PC-9 (cell line): ENCODE measurements at regions of chr17 and their contacts with region 1.

Region 1: DNA sequence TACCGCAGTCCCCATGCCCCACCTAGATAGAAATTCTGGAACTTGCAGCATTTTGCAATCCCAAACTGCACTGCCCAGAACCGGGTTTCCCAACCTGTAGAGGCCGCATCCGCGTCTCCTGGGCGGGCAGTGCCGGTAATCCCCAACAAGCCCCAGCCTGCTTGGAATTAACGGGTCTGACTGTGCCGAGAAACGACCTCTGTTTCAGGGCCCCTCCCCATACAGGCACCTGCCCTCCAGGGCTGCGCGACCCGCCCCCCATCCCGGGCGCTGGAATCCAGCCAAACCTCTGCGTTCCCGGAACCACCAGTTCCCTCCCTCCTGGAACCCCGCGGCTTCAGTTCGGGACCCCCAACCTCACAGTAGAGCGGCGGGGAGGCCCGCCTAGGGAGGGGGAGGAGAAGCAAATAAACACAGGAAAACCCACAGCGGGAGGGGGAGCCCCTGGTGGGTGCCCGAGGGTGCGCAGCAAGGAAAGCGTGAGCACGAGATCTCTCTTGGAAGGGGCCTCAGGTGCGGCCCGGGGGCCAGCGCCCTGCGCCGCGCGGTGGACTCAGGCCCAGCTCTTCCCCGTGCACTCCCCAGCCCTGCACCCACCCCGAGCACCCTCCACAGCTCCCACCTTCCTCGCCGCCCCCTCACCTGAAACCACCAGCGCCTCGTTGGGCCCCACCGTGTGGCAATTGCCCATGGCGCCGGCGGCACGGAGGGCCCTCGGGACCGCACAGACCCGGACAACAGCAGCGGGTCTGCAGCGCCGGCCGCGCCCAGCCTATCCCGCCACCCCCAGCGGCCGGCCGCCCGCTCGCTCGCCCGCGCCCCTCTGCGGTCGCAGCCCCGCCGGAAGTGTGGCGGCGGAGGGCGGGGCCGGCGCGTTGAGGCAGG is at the start of gene FLOT2:
- DNase-seq: peak in 1 of 2 experiments; percentile 58
- H3K4me3 ChIP-seq: peak within 1 kb of the TSS; percentile 80
- H3K27ac ChIP-seq: no peak within 1 kb of the TSS
- H3K4me1 ChIP-seq: peaks cover 28% of the 10 kb centered on the region
- H3K27me3 ChIP-seq: no peaks in the 10 kb centered on the region
- CTCF ChIP-seq: no peak
- total RNA-seq, gene FLOT2: 118 and 128 TPM in 2 replicates

Region 2: DNA sequence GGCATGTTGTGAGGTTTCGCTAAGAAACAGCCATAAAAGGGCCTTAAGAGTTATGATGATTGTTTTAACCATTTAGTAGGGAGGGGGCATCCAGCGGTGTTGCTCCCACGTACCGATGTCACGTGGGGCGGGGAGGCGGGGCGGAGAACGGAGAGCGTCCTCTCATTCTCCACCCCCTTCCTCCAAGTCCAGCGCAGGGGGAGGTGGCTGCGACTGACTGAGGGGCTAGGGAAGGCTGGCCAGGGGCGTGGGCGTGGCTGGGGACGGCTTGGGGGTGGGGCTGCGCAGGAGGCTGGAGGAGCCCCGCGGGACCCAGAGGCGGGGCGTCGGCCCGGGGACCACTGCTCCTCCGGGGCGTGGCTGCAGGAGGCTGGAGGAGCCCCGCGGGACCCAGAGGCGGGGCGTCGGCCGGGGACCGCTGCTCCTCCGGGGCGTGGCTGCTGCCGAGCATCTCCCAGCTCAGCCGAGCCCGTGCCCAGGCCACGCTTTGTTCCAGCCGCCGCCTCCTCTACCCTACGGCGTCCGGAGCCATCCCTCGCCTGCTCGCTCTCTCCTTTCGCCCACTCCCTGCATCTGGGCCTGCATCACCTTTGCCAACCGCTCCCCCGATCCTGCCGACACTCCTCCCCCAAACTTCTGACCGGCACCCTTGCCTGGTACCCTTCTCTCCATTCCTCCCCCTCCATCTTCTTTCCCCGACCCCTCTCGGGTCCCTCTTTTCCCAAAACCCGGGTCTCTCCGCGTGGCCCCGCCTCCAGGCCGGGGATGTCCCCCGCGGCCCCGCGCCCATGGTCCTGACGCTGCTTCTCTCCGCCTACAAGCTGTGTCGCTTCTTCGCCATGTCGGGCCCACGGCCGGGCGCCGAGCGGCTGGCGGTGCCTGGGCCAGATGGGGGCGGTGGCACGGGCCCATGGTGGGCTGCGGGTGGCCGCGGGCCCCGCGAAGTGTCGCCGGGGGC is 525.6 kb before region 1 on chr17 and contains the start of gene SARM1:
- CTCF ChIA-PET with region 1: no interaction called
- POLR2A ChIA-PET with region 1: no interaction called
- intact Hi-C with region 1: no loop called
- DNase-seq: no peak
- H3K4me3 ChIP-seq: no peak within 1 kb of the TSS
- H3K27ac ChIP-seq: no peak within 1 kb of the TSS
- H3K4me1 ChIP-seq: peaks cover 18% of the 10 kb centered on the region
- H3K27me3 ChIP-seq: no peaks in the 10 kb centered on the region
- CTCF ChIP-seq: no peak
- total RNA-seq, gene SARM1: 7.3 and 8.6 TPM in 2 replicates

Region 3: GRCh38 chr17:28743225-28744103 is 153.7 kb before region 1 on chr17 and contains the start of gene TRAF4:
- CTCF ChIA-PET with region 1: no interaction called
- POLR2A ChIA-PET with region 1: interaction called, 13 read pairs
- intact Hi-C with region 1: no loop called
- DNase-seq: peak; percentile 94
- H3K4me3 ChIP-seq: peak within 1 kb of the TSS; percentile 97
- H3K27ac ChIP-seq: peak within 1 kb of the TSS; percentile 96
- H3K4me1 ChIP-seq: peaks cover 42% of the 10 kb centered on the region
- H3K27me3 ChIP-seq: no peaks in the 10 kb centered on the region
- CTCF ChIP-seq: peak; percentile 3; the same call in 1 of the 2 replicates
- total RNA-seq, gene TRAF4: 159 and 169 TPM in 2 replicates

Region 4: DNA sequence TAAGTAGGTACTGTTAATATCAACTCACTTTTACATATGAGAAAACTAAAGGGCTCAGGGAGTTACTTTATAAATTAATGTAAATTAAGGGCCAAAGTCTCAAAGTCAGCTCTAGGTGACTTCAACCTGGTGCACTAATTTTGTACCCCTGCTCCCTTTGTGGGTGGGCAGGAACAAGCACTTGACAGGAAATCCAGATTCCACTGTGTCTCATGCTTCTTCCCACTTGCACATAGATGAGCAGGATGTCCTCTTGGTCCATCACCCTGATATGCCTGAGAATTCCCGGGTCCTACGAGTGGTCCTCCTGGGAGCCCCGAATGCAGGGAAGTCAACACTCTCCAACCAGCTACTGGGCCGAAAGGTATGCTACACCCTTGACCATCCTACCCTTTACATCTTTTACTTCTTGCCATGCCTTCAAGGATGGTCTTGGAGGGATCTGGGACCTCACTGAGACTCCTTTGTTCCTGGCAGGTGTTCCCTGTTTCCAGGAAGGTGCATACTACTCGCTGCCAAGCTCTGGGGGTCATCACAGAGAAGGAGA is 41.0 kb before region 1 on chr17:
- CTCF ChIA-PET with region 1: no interaction called
- POLR2A ChIA-PET with region 1: interaction called, 12 read pairs
- intact Hi-C with region 1: no loop called
- DNase-seq: no peak
- H3K4me3 ChIP-seq: peak overlapping the region; percentile 65; the same call in 1 of the 2 replicates
- H3K27ac ChIP-seq: no peak overlapping the region
- H3K4me1 ChIP-seq: peaks cover 5% of the 10 kb centered on the region; the same call in 1 of the 2 replicates
- H3K27me3 ChIP-seq: no peaks in the 10 kb centered on the region
- CTCF ChIP-seq: no peak

Region 5: DNA sequence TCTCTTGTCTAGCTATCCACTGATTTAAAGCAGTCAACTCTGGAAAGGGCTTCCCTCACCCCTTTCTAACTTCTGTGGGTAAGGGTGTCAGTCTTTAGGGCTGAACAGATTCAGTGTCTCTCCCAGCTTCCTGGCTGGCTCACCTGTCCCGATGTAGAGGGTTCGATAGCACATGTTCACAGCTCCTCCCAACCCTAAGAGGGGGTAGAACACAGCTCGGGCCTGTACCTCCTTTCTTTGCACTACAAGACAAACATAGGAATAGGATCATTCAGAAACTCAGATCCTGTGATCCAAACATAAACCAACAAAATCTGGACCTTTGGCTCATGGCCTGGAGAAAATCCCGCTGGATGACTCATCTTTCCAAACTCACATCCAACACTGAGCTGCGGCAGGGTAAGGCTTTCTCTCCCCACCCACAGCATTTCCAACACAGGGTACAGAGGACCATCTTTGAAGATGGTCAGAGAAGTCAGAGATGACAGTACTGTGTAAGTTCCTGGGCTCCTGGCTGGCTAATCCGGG is 11.6 kb after region 1 on chr17:
- CTCF ChIA-PET with region 1: interaction called, 16 read pairs
- POLR2A ChIA-PET with region 1: no interaction called
- intact Hi-C with region 1: no loop called
- DNase-seq: no peak
- H3K4me3 ChIP-seq: no peak overlapping the region
- H3K27ac ChIP-seq: no peak overlapping the region
- H3K4me1 ChIP-seq: no peaks in the 10 kb centered on the region
- H3K27me3 ChIP-seq: no peaks in the 10 kb centered on the region
- CTCF ChIP-seq: no peak

Region 6: GRCh38 chr17:28982131-28982951 is 85.2 kb after region 1 on chr17:
- CTCF ChIA-PET with region 1: interaction called, 12 read pairs
- POLR2A ChIA-PET with region 1: no interaction called
- intact Hi-C with region 1: no loop called
- DNase-seq: peak in 1 of 2 experiments; percentile 38
- H3K4me3 ChIP-seq: no peak overlapping the region
- H3K27ac ChIP-seq: no peak overlapping the region
- H3K4me1 ChIP-seq: no peaks in the 10 kb centered on the region
- H3K27me3 ChIP-seq: peaks cover 32% of the 10 kb centered on the region
- CTCF ChIP-seq: no peak